A673 (cell line): ENCODE measurements at regions of chrX and their contacts with region 1.

Region 1: DNA sequence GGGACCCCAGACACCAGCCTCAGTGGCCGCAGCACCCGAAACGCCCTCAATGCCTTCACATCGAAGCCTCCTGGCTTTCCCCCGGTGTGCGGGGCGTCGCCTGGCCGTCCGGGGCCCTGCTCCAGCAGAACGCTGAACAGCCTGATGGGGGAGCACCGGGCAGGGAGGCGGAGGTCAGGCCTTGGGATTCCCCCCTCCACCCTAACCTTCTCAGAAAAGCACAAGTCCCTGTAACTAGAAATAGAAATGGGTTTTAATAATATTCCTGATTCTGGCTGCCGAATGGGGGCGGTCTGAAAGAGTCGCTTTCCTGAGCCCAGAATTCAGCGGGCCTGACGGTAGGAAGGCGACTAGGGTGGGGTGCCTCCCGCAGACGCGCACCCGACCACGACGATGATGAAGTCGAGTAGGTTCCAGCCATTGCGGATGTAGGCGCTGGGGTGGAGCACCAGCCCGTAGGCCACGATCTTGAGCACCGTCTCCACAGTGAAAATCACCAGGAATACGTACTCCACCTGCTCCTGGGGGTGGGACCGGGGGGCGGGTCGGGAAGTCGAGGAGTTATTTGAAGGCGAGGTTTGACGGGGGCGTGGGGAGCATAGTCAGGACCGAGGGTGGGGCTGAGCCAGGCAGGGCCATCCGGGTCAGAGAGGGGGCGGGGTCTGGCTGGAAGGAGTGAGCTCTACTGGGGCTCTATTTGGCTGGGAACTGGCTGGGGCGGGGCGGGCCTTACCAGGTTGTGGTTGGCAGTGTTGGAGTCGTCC is 2.5 kb downstream of the CACNA1F start:
- DNase-seq: peak; percentile 25
- H3K4me3 ChIP-seq: peak overlapping the region; percentile 23
- H3K27ac ChIP-seq: no peak overlapping the region
- H3K4me1 ChIP-seq: no peaks in the 10 kb centered on the region
- H3K27me3 ChIP-seq: no peaks in the 10 kb centered on the region
- CTCF ChIP-seq: 0 out of 2 replicates have a peak, but pooled peaks have one; percentile 14

Region 2: GRCh38 chrX:49191033-49191871 is 39.4 kb before region 1 on chrX:
- CTCF ChIA-PET with region 1: no interaction called
- POLR2A ChIA-PET with region 1: no interaction called
- intact Hi-C with region 1: loop called (anchors 1 kb)
- DNase-seq: peak; percentile 98
- H3K4me3 ChIP-seq: peak overlapping the region; percentile 61
- H3K27ac ChIP-seq: peak overlapping the region; percentile 83
- H3K4me1 ChIP-seq: no peaks in the 10 kb centered on the region
- H3K27me3 ChIP-seq: no peaks in the 10 kb centered on the region
- CTCF ChIP-seq: no peak